BJ (cell line): ENCODE measurements at regions of chr15 and their contacts with region 1.

Region 1: DNA sequence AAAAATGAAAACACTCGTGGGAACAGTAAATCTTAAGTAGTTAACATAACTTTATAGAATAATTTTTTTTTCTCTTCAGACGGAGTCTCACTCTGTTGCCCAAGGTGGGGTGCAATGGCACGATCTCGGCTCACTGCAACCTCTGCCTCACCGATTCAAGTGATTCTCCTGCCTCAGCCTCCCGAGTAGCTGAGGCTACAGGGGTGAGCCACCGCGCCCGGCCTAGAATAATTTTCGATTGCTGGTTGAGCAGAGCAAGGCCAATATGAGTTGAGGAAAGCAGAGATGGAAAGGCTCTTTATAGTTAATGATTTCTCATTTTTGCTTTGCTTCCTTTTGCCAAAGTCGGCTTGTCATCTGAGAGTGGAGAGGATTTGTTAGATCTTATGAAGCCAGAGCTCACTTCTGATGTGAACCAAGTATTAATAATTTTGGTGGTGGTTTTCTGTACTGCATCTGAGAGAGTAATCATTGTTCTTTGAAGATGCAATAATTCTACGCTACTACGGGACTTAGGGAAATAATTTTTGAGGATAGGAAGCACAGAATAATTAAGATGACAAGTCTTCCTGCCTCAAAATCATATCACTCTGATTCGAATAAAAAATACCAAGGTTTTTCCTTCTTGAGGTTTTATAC is 1.6 kb upstream of the GOLM2 start:
- DNase-seq: no peak
- H3K4me3 ChIP-seq: peak overlapping the region; percentile 75
- H3K27me3 ChIP-seq: no peaks in the 10 kb centered on the region
- CTCF ChIP-seq: no peak

Region 2: DNA sequence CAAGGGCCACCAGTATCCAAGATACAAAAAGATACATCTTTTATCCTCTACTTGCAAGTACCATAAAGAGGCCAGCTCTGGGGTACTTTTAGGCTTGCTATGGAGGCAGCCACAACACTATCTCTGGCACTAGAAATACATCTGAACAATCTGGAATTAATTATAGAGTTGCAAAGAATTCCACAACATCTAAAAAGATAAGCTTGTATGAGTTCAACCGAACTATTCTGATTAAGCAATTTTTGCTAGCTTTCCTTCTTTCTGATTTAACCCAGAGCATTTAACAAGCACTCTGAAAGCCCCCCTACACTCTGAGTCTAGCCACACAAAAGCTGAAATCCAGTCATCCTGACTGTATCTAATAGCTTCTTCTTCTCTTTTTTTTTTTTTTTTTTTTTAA is 187.3 kb before region 1 on chr15:
- CTCF ChIA-PET with region 1: no interaction called
- POLR2A ChIA-PET with region 1: interaction called, 21 read pairs
- DNase-seq: no peak
- H3K4me3 ChIP-seq: no peak overlapping the region
- H3K27me3 ChIP-seq: no peaks in the 10 kb centered on the region
- CTCF ChIP-seq: no peak

Region 3: GRCh38 chr15:44265757-44266156 is 21.2 kb before region 1 on chr15:
- CTCF ChIA-PET with region 1: no interaction called
- POLR2A ChIA-PET with region 1: no interaction called
- DNase-seq: no peak
- H3K4me3 ChIP-seq: no peak overlapping the region
- H3K27me3 ChIP-seq: no peaks in the 10 kb centered on the region
- CTCF ChIP-seq: no peak

Region 4: DNA sequence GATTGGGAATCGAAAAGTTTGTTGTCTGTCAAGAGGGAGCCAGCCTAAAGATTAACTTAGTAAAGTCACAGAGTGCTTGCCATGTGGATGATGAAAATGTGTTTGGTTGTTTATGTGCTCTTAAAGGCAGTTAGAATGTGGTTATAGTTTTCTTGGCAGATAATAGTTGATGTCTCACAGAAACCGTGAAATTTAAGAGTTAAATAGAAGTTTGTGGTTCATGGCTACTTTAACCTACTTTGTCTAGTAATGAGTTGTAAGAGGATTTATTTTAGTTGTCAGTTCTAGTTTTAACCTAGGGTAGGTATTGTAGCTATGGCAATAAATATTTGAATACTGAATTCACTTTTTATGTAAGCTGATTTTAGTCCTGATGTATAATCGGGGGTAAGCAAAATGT is 213.6 kb after region 1 on chr15:
- CTCF ChIA-PET with region 1: interaction called, 3 read pairs
- POLR2A ChIA-PET with region 1: interaction called, 10 read pairs
- DNase-seq: no peak
- H3K4me3 ChIP-seq: no peak overlapping the region
- H3K27me3 ChIP-seq: no peaks in the 10 kb centered on the region
- CTCF ChIP-seq: no peak